ENCODE measurements at regions of chr1 and their contacts with region 1.

Region 1: DNA sequence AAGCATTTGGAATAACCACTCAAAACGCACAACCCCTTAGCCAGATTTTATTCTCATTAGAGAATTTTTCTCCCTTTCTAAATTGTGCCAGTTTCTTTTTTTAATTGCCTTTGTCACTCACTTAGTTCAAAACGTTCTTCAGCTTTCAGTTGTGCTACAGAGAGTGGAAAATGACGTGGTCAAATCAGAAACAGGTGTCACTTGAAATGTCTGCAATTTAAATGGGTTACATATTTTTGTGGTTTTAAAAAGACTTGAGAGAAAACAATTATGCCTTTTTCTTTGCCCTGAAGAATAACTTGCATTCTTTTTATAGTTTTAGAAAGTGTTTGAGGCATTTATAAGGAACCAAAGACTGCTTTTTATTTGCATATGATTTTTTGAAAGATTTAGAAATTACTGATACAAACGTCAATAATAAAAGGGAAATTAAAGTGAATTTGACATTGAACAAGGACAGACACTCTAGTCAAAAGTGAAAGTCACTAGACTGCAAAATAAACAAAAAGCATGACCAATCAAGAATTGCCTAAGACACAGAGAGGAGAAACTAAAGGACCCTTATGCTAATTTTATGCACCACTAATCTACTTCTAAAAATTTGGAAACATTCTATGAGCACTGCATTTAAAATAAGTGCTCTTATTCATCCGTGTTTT is 191.0 kb downstream of the TPR start:
- DNase-seq: no peak
- ATAC-seq: no peak
- H3K4me3 ChIP-seq: no peak overlapping the region
- H3K4me3 Mint-ChIP-seq: no peak overlapping the region
- H3K27ac ChIP-seq: no peak overlapping the region
- H3K27ac Mint-ChIP-seq: no peak overlapping the region
- H3K4me1 ChIP-seq: no peaks in the 10 kb centered on the region
- H3K4me1 Mint-ChIP-seq: no peaks in the 10 kb centered on the region
- H3K27me3 ChIP-seq: no peaks in the 10 kb centered on the region
- H3K27me3 Mint-ChIP-seq: peaks cover 5% of the 10 kb centered on the region
- CTCF ChIP-seq: no peak

Region 2: GRCh38 chr1:186078245-186078644 is 105.9 kb before region 1 on chr1:
- CTCF ChIA-PET with region 1: no interaction called
- POLR2A ChIA-PET with region 1: no interaction called
- intact Hi-C with region 1: no loop called
- DNase-seq: no peak
- ATAC-seq: no peak
- H3K4me3 ChIP-seq: no peak overlapping the region
- H3K4me3 Mint-ChIP-seq: no peak overlapping the region
- H3K27ac ChIP-seq: no peak overlapping the region
- H3K27ac Mint-ChIP-seq: no peak overlapping the region
- H3K4me1 ChIP-seq: no peaks in the 10 kb centered on the region
- H3K4me1 Mint-ChIP-seq: no peaks in the 10 kb centered on the region
- H3K27me3 ChIP-seq: no peaks in the 10 kb centered on the region
- H3K27me3 Mint-ChIP-seq: peaks cover 10% of the 10 kb centered on the region
- CTCF ChIP-seq: no peak

Region 3: GRCh38 chr1:186129758-186130157 is 54.3 kb before region 1 on chr1:
- CTCF ChIA-PET with region 1: no interaction called
- POLR2A ChIA-PET with region 1: no interaction called
- intact Hi-C with region 1: loop called in 1 of 2 experiments (anchors 2 kb)
- DNase-seq: no peak
- ATAC-seq: no peak
- H3K4me3 ChIP-seq: no peak overlapping the region
- H3K4me3 Mint-ChIP-seq: no peak overlapping the region
- H3K27ac ChIP-seq: no peak overlapping the region
- H3K27ac Mint-ChIP-seq: no peak overlapping the region
- H3K4me1 ChIP-seq: no peaks in the 10 kb centered on the region
- H3K4me1 Mint-ChIP-seq: no peaks in the 10 kb centered on the region
- H3K27me3 ChIP-seq: no peaks in the 10 kb centered on the region
- H3K27me3 Mint-ChIP-seq: peaks cover 4% of the 10 kb centered on the region
- CTCF ChIP-seq: no peak

Region 4: GRCh38 chr1:186202271-186202764 is 18.2 kb after region 1 on chr1:
- CTCF ChIA-PET with region 1: no interaction called
- POLR2A ChIA-PET with region 1: no interaction called
- intact Hi-C with region 1: no loop called
- DNase-seq: no peak
- ATAC-seq: no peak
- H3K4me3 ChIP-seq: no peak overlapping the region
- H3K4me3 Mint-ChIP-seq: no peak overlapping the region
- H3K27ac ChIP-seq: no peak overlapping the region
- H3K27ac Mint-ChIP-seq: no peak overlapping the region
- H3K4me1 ChIP-seq: peaks cover 15% of the 10 kb centered on the region
- H3K4me1 Mint-ChIP-seq: peaks cover 19% of the 10 kb centered on the region
- H3K27me3 ChIP-seq: peaks cover 0 to 10% of the 10 kb centered on the region in 2 experiments
- H3K27me3 Mint-ChIP-seq: peaks cover 16% of the 10 kb centered on the region
- CTCF ChIP-seq: no peak

Region 5: GRCh38 chr1:186308264-186309060 is 124.4 kb after region 1 on chr1:
- CTCF ChIA-PET with region 1: no interaction called
- POLR2A ChIA-PET with region 1: no interaction called
- intact Hi-C with region 1: no loop called
- DNase-seq: peak in 1 of 9 experiments; percentile 9
- ATAC-seq: no peak
- H3K4me3 ChIP-seq: no peak overlapping the region
- H3K4me3 Mint-ChIP-seq: no peak overlapping the region
- H3K27ac ChIP-seq: no peak overlapping the region
- H3K27ac Mint-ChIP-seq: no peak overlapping the region
- H3K4me1 ChIP-seq: peaks cover 50% of the 10 kb centered on the region
- H3K4me1 Mint-ChIP-seq: peaks cover 37% of the 10 kb centered on the region
- H3K27me3 ChIP-seq: no peaks in the 10 kb centered on the region
- H3K27me3 Mint-ChIP-seq: no peaks in the 10 kb centered on the region
- CTCF ChIP-seq: no peak